Spleen (tissue), 13 donors: ENCODE measurements at regions of chrX and their contacts with region 1.

Region 1: GRCh38 chrX:16786139-16786790 is at the start of gene TXLNG:
- DNase-seq: peak; percentile 99
- H3K4me3 ChIP-seq: peak within 1 kb of the TSS; percentile 53 to 96 (median 73)
- H3K27ac ChIP-seq: peak within 1 kb of the TSS; percentile 72 to 95 (median 87)
- H3K4me1 ChIP-seq: peaks cover 8 to 29% (median 11%) of the 10 kb centered on the region in 6 donors
- H3K27me3 ChIP-seq: no peaks in the 10 kb centered on the region
- CTCF ChIP-seq: peak in 1 of 11 experiments; percentile 5
- POLR2A ChIP-seq: peak in 2 of 3 donors; percentile 79 to 89
- total RNA-seq, gene TXLNG: 9.6 to 20.2 (median 13.2) TPM

Region 2: DNA sequence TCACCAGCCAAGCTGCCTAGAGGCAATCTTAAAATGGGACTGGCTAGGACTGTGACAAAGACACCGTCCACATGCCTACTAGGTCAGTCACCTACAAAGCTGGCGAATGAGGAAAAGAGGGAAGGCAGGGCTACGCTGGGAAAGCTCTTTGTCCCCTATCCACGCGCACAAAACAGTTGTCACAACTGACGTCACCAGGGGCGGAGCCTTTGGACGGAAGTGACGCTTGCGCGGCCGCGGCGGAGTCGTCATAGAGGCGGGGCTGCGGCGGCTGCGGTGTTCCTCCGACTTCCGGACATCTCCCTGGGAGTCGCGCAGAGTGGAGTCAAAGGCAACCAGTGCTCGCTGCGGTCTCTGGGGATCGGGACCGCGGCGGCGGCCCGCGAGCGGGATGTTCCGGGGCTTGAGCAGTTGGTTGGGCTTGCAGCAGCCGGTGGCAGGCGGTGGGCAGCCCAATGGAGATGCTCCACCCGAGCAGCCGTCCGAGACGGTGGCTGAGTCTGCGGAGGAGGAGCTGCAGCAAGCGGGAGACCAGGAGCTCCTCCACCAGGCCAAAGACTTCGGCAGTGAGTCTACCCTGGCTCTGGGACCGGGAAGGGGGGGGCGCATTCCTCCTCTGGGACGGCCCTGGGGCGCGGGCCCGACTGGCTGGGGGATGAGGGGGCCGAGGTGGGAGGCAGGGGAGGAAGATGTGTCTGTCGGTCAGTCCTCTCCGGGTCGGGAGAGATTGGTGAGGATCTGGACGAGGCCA is 66.8 kb before region 1 on chrX and contains the start of gene SYAP1:
- intact Hi-C with region 1: loop called (anchors 10 kb)
- DNase-seq: peak; percentile 98
- H3K4me3 ChIP-seq: peak within 1 kb of the TSS; percentile 50 to 77 (median 60)
- H3K27ac ChIP-seq: peak within 1 kb of the TSS; percentile 79 to 96 (median 92)
- H3K4me1 ChIP-seq: peaks cover 7 to 24% (median 13%) of the 10 kb centered on the region in 6 donors
- H3K27me3 ChIP-seq: no peaks in the 10 kb centered on the region
- CTCF ChIP-seq: peak in 1 of 11 experiments; percentile 5
- POLR2A ChIP-seq: peak; percentile 54 to 85 (median 80)
- total RNA-seq, gene SYAP1: 16.7 to 23.2 (median 19.7) TPM

Region 3: DNA sequence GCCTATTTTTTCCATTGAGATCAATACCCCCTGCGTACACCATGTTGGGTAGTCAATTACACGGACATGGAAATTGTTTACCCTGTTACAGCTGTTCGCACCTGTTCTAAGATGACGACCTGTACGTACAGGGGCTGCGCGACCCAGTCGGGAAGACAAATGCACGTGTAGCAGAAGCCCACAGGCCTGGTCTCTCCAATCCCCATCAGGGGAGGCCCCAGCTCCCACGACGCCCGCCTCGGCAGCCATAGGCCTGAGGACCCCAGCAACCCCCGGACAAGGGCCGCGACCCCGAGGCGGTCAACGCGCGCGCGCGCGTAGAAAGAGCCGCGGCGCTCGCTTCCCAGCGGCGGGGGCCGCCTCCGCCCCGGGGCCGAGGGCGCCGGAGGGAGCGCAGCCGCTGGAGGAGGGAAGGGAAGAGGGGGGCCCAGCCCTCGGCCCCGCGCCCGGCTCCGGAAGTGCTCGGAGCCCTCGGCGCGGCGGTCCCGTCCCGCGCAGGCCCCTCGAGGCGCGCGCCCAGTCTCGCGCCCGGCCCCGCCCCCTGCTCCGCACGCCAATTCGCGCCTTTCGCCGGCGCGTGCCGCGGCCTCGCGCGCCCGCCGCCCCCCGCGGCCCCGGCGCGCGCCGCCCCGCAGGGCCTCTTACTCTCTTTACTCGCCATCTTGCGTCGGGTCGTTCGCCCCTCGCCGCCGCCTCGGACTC is 83.3 kb after region 1 on chrX:
- intact Hi-C with region 1: loop called (anchors 10 kb)
- DNase-seq: peak; percentile 90
- H3K4me3 ChIP-seq: peak overlapping the region; percentile 57 to 91 (median 67)
- H3K27ac ChIP-seq: peak overlapping the region; percentile 78 to 95 (median 92)
- H3K4me1 ChIP-seq: peaks cover 0 to 52% (median 31%) of the 10 kb centered on the region in 6 donors
- H3K27me3 ChIP-seq: peaks cover 0 to 24% (median 0%) of the 10 kb centered on the region in 7 donors
- CTCF ChIP-seq: no peak
- POLR2A ChIP-seq: no peak